ENCODE measurements at regions of chr6 and their contacts with region 1.

Region 1: GRCh38 chr6:73610444-73611275 is 43.1 kb downstream of the SLC17A5 start:
- DNase-seq: no peak
- ATAC-seq: peak; percentile 71

Region 2: GRCh38 chr6:73515204-73515655 is 95.4 kb before region 1 on chr6:
- intact Hi-C with region 1: loop called (anchors 2 kb)
- DNase-seq: no peak
- ATAC-seq: no peak

Region 3: DNA sequence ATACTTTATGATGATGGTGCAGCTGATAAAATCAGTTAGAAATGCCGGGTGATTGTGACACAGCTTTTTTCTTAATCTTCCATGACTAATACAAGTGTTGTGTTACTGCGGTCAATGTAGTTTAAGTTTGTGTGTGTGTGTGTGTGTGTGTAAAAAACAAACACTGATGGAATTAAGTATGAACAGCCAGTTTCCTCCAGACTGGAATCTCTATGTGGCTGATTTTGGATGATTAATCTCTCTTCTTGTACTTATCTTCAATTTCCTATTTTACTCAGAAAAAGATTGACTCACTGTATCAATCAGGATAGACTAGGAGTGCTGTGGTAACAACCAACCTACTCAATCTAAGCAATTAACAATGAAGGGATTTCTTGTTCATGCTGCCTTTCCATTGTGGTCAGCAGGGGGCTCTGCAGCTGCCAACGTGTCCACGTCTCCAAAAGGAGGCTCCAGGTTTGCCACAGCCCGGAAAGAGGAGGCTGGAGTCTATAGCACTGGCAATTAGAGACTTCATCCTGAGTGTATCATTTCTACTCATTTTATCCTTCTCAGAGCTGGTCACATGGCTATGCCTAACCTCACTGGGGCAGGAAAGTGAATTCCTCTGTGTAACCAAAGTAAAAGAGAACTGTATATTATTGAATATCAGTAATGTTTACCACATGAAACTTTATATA is 193.0 kb after region 1 on chr6:
- intact Hi-C with region 1: no loop called
- DNase-seq: peak; percentile 43
- ATAC-seq: no peak

Measured in Right ventricle myocardium superior (tissue), 1 donor.